ENCODE measurements at regions of chr17 and their contacts with region 1.

Region 1: GRCh38 chr17:43125133-43125966 is at the start of gene BRCA1:
- DNase-seq: peak; percentile 99
- H3K4me3 Mint-ChIP-seq: peak within 1 kb of the TSS; percentile 100
- H3K27ac Mint-ChIP-seq: peak within 1 kb of the TSS; percentile 99
- H3K4me1 Mint-ChIP-seq: peaks cover 29% of the 10 kb centered on the region
- H3K27me3 Mint-ChIP-seq: no peaks in the 10 kb centered on the region
- total RNA-seq, gene BRCA1: 88.1 and 93.3 TPM in 2 replicates

Region 2: DNA sequence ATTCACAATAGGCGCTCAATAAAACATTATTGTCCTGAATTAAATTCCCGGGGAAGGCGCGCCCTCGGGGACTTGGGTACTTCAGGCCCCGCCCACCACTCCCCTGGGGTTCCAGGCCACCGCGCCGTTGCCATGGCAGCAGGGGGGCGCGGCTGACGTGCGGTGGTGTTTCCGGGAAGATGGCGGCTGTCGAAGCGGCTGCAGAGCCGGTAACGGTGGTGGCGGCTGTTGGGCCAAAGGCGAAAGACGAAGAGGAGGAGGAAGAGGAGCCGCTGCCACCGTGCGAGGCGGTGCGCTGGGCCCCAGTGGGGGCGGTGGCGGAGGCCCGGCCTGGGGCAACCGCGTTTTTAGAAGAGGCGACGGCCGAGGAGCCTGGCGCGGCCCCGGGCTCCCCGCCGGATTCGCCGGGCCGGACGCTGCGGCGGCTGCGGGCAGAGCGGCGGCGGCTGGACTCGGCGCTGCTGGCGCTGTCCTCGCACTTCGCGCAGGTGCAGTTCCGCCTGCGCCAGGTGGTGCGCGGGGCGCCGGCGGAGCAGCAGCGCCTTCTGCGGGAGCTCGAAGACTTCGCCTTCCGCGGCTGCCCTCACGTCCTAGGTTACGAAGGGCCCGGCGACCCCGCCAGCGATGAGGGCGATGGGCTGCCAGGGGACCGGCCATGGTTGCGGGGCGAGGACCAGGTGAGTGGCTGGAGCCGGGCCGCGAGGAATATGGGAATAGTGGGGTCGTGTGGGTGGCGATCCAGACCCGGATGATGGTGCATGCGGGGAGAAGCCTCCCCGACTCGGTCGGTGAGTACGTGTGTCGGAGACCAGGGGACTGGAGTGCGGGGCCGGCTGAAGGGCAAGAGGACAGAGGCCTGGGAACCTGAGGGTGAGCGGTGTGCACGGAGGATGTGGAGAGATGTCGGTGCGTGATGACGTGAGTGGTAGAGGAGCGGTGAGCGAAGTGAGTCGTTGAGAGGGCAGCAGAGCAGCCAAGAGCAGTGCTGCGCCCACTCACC is 144.7 kb before region 1 on chr17 and contains the start of gene RUNDC1:
- intact Hi-C with region 1: loop called (anchors 1 kb)
- DNase-seq: peak; percentile 98
- H3K4me3 Mint-ChIP-seq: peak within 1 kb of the TSS; percentile 96
- H3K27ac Mint-ChIP-seq: peak within 1 kb of the TSS; percentile 98
- H3K4me1 Mint-ChIP-seq: peaks cover 29% of the 10 kb centered on the region
- H3K27me3 Mint-ChIP-seq: no peaks in the 10 kb centered on the region
- total RNA-seq, gene RUNDC1: 20.2 and 20.5 TPM in 2 replicates

Region 3: DNA sequence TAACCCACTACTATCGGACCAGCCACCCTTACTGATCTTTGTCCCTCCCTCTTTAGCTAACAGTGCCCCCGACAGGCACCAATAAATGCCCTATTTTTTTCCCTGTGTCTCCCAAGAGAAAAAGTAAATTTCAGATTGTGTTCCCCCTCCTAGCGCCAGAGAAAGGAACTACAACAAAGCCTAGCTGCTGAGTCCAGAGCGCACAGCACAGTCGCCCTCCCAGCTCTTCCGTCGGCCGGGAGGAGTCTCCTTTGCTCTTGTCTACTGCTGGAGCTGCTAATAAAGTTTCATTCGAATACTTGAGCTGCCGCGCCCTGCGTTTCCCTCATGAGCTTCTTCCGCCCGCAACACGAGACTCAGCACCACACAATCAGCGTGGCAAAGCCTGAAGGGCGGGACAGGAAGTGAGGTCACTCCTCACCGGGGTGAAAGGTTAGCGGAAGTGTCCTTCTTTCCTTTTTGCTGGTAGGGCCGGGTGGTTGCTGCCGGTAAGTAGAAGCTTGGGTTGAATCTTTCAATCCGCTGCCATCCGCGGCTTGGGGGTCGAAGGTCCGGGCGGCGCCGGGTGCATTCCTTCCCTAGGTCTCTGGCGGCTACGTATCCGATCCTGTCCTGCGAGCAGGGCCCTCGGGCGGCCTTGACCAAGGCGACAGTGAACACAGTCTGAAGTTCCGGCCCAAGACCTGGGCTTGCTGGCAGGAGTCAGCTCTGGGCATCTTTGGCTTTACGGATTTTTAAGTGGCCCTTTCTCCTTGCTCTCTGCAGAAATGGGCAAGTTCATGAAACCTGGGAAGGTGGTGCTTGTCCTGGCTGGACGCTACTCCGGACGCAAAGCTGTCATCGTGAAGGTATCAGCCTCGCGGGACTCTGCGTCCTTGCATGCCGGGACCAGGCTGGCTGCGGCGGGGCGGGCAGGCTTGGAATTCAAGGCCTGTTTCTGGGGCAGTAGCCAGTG is 127.1 kb before region 1 on chr17 and contains the start of gene RPL27:
- intact Hi-C with region 1: loop called (anchors 1 kb)
- DNase-seq: peak; percentile 99
- H3K4me3 Mint-ChIP-seq: peak within 1 kb of the TSS; percentile 99
- H3K27ac Mint-ChIP-seq: peak within 1 kb of the TSS; percentile 99
- H3K4me1 Mint-ChIP-seq: peaks cover 22% of the 10 kb centered on the region
- H3K27me3 Mint-ChIP-seq: no peaks in the 10 kb centered on the region
- total RNA-seq, gene RPL27: 1,178 and 1,206 TPM in 2 replicates

Region 4: GRCh38 chr17:43024407-43025289 is 100.7 kb before region 1 on chr17 and contains the start of gene RND2:
- intact Hi-C with region 1: loop called (anchors 10 kb)
- DNase-seq: peak; percentile 93
- H3K4me3 Mint-ChIP-seq: peak within 1 kb of the TSS; percentile 89
- H3K27ac Mint-ChIP-seq: peak within 1 kb of the TSS; percentile 83
- H3K4me1 Mint-ChIP-seq: peaks cover 19% of the 10 kb centered on the region
- H3K27me3 Mint-ChIP-seq: peaks cover 15% of the 10 kb centered on the region
- total RNA-seq, gene RND2: 0.07 TPM in 2 replicates

Region 5: GRCh38 chr17:43170766-43171585 is 45.6 kb after region 1 on chr17 and contains the start of gene NBR1:
- intact Hi-C with region 1: loop called (anchors 1 kb)
- DNase-seq: peak; percentile 99
- H3K4me3 Mint-ChIP-seq: no peak within 1 kb of the TSS
- H3K27ac Mint-ChIP-seq: no peak within 1 kb of the TSS
- H3K4me1 Mint-ChIP-seq: peaks cover 30% of the 10 kb centered on the region
- H3K27me3 Mint-ChIP-seq: no peaks in the 10 kb centered on the region
- total RNA-seq, gene NBR1: 51.2 and 53.5 TPM in 2 replicates

Region 6: DNA sequence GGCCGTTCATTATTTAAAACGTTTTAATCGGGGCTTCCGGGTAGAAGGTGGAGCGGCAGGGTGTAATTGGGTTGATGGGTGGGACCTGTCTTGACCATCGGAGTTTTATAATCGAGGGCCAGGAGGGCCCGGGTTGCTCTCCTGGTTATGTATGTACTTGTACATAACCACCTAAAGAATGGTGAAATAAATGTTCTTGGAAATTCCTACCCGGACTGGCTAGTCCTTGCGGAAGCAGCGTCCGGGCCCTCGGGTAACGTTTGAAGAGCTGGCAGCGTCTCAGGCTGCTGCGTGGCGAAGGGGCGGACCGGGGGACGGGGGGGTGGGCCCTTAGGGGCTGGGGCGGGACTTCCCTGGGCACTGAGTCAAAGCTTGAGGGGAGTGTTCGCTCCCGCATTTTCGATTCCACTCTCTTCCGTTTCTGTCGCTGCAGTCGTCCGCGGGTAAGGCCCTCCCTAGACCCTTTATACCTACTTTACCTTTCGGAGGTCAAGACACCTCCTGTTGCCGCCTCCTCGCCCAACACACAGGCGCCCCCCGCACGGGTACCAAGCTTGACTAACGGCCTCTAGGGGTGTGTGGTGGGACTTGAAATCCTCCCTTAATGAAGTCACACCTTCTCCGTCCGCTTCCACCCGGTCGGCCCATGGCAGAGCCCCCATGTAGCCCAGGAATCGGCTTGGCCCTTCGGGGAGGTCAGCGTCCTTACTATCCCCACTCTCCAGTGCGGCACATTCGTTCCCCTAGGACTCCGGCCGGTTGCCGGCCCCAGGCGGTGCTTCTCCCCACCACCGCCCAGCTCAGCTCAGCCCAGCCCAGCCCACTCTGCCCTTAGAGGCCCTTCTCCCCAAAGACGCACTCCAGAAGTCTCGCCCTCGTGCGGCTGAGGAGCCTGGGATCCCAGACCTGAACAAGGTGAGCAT is 86.4 kb after region 1 on chr17 and contains the start of gene TMEM106A:
- intact Hi-C with region 1: loop called (anchors 5 kb)
- DNase-seq: peak; percentile 91
- H3K4me3 Mint-ChIP-seq: peak within 1 kb of the TSS; percentile 99
- H3K27ac Mint-ChIP-seq: peak within 1 kb of the TSS; percentile 90
- H3K4me1 Mint-ChIP-seq: peaks cover 32% of the 10 kb centered on the region
- H3K27me3 Mint-ChIP-seq: no peaks in the 10 kb centered on the region
- total RNA-seq, gene TMEM106A: 17.9 and 19.1 TPM in 2 replicates

Region 7: GRCh38 chr17:43316522-43317142 is 191.3 kb after region 1 on chr17:
- intact Hi-C with region 1: loop called (anchors 1 kb)
- DNase-seq: peak; percentile 79
- H3K4me3 Mint-ChIP-seq: peak overlapping the region; percentile 15
- H3K27ac Mint-ChIP-seq: no peak overlapping the region
- H3K4me1 Mint-ChIP-seq: peaks cover 20% of the 10 kb centered on the region
- H3K27me3 Mint-ChIP-seq: peaks cover 2% of the 10 kb centered on the region

Region 8: GRCh38 chr17:43388359-43389045 is 263.2 kb after region 1 on chr17:
- intact Hi-C with region 1: no loop called
- DNase-seq: peak; percentile 98
- H3K4me3 Mint-ChIP-seq: peak overlapping the region; percentile 98
- H3K27ac Mint-ChIP-seq: peak overlapping the region; percentile 100
- H3K4me1 Mint-ChIP-seq: peaks cover 26% of the 10 kb centered on the region
- H3K27me3 Mint-ChIP-seq: peaks cover 2% of the 10 kb centered on the region

Measured in activated CD4-positive, alpha-beta T cell treated with anti-CD3 and anti-CD28 coated beads, Interleukin-2, amount 10 ng/mL, durations not matched to agents 24 days and 14 days (primary cell).